ENCODE measurements at regions of chr14 and their contacts with region 1.

Region 1: GRCh38 chr14:60622917-60623257 is 26.4 kb downstream of the SIX1 start:
- DNase-seq: no peak
- H3K4me3 ChIP-seq: no peak overlapping the region
- H3K4me1 ChIP-seq: no peaks in the 10 kb centered on the region
- H3K27me3 ChIP-seq: no peaks in the 10 kb centered on the region

Region 2: DNA sequence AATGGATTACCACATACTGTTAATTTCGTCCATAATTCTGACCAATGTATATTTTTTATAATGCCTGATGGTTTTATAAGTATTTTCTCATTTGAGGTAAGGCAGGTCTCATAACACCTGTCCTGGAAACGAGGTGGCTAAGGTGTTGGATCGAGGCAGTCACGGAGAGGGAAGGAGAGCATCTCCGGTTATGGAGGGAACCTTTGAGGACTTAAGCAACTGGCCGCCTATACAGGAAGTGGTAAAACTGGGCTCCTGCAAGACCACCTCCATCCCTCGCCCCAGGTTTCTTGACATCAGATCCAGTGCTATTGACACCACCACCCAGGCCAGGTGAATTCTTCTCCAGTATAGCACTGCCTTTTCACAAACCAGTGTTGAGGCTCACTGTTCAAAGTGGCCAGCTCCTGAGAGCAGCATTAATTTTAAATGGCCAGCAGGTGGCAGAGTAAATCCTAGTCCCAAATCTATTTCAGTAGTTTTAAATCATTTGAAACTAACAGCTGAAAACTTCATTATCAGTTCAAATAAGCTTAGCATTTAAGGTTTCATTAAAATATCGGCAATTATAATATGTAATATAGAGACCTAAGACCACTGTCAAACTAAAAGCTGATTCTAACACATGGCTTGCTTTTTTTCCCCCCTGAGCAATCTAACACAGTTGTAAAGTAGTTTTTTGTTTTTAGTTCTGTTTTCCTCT is 273.1 kb before region 1 on chr14:
- in situ Hi-C with region 1: no loop called
- DNase-seq: peak; percentile 51 to 61
- H3K4me3 ChIP-seq: no peak overlapping the region
- H3K4me1 ChIP-seq: peaks cover 12% of the 10 kb centered on the region
- H3K27me3 ChIP-seq: no peaks in the 10 kb centered on the region

Region 3: DNA sequence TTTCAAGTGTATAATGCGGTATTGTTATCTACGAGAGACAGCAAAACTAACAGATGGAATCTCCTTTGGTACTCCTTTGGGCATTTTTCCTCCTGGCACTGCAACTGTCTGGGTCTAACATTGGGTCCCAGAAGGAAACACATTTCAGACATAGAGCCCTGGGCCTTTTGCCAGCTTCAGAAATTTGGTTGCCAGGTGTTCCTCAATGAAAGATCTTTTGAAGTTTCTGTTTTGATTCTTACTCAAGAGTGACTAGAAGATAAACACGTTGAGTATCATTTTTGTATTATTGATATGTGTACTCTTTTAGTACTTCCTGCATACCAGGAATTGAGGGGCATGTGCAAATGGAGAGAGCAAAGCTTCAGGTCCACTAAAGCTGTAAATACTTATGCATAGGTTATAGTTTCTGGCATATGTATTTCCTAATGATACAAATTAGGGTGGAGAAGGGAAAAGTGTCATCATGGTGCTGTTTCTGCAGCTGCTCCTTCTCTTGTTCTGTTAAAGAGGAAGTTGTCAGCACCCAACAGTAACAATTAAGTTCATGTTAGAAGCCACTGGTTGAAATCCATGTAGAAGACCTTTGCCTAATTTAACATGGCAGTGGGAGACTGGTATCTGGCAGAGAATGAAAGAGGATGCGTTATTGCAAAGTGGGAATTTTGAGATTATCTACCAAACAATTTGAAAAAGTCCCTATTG is 411.7 kb after region 1 on chr14:
- in situ Hi-C with region 1: loop called (anchors 10 kb)
- DNase-seq: no peak
- H3K4me3 ChIP-seq: no peak overlapping the region
- H3K4me1 ChIP-seq: no peaks in the 10 kb centered on the region
- H3K27me3 ChIP-seq: no peaks in the 10 kb centered on the region

Measured in HAP-1 (cell line).